ENCODE measurements at regions of chr3 and their contacts with region 1.

Region 1: GRCh38 chr3:99009851-99010250 is 108.4 kb upstream of the DCBLD2 start:
- DNase-seq: no peak
- ATAC-seq: no peak

Region 2: DNA sequence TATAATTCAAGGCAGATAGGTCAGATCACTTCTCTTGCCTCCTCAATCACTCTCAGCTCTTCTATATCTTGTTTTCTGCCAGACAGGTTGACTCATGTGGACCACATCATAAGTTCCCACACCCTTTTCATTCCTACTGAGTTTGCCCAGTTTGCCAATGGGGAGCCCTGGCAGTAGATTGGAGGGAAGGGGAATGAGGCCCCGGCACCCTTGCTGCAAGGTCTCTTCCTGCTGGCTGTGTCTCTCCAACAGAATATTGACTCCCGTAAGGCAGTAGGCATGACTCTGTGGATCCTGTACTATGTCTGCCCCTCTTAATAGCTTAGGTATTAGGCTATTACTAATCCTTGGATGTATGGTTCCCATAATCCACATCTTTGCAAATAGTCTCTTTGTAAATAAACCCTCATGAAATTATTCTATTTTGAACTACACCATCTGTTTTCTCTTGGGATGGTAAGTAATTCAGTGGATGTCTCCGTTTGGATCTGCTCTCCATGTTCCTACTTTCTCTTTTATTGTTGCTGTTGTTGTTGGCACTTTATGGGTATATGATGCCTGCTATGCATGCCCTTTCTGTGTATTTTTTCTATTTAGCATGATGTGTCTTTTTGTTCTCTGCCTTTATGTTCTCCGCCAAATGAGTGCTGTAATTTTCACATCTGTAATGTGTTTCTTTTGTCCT is 42.8 kb before region 1 on chr3:
- intact Hi-C with region 1: no loop called
- DNase-seq: no peak
- ATAC-seq: no peak

Region 3: GRCh38 chr3:98980915-98981596 is 28.8 kb before region 1 on chr3:
- intact Hi-C with region 1: loop called in 1 of 2 experiments (anchors 2 kb)
- DNase-seq: no peak
- ATAC-seq: no peak

Region 4: DNA sequence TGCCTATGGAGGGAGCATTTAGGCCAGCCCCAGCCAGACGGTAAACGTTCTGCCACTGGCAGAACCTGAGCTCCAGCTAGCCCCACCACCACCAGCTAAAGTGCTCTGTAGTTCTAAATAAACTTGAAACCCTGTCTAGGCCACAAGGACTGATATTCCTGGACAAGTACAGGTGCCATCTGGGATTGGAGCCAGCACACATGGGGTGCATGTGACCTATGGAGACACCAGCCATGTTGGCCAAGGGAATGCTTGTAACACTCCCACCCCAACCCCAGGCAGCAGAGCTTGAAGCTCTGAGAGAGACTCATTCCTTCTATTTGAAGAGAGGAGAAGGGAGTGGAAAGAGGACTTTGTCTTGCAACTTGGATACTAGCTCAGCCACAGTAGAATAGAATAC is 176.2 kb after region 1 on chr3:
- intact Hi-C with region 1: no loop called
- DNase-seq: no peak
- ATAC-seq: no peak

Measured in left cardiac atrium (tissue), 4 donors.